B cell (primary cell): ENCODE measurements at regions of chr4 and their contacts with region 1.

Region 1: GRCh38 chr4:119099227-119099801 is 36.3 kb upstream of the MYOZ2 start:
- DNase-seq: no peak
- ATAC-seq: no peak
- H3K4me3 ChIP-seq: no peak overlapping the region
- H3K4me3 Mint-ChIP-seq: no peak overlapping the region
- H3K27ac ChIP-seq: no peak overlapping the region
- H3K27ac Mint-ChIP-seq: no peak overlapping the region
- H3K4me1 ChIP-seq: no peaks in the 10 kb centered on the region
- H3K4me1 Mint-ChIP-seq: peaks cover 2% of the 10 kb centered on the region
- H3K27me3 ChIP-seq: peaks cover 0 to 4% (median under 1%) of the 10 kb centered on the region in 4 experiments
- H3K27me3 Mint-ChIP-seq: peaks cover 17% of the 10 kb centered on the region
- CTCF ChIP-seq: no peak

Region 2: DNA sequence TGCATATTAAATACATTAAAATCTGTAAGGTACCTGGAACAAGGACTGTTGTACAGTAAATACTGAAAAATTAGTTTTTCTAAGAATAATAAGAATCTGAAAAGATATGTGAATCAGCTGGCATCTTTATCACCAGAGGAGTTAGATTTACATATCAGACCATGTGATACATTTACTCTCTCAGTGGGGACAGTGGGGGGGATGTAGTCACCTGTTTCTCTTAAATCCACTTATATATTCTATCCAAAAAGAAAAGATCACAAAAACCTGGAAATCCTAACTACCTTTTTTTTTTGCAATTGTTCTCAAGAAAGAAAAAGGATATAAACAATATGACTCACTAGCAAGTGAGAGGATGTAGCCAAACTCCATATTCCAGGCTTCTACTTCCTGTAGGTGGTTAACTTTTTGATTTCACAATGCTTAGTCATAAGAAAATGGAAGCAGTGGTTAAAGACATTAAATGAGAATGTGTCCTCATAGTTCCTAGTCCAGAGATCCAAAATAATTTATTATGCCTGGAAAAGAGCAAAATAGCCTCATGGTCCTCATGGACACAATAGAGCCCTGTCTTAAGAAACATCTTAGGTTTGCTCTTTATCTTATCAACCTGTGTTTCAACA is 13.8 kb after region 1 on chr4:
- CTCF ChIA-PET with region 1: no interaction called
- POLR2A ChIA-PET with region 1: no interaction called
- intact Hi-C with region 1: no loop called
- DNase-seq: no peak
- ATAC-seq: no peak
- H3K4me3 ChIP-seq: no peak overlapping the region
- H3K4me3 Mint-ChIP-seq: no peak overlapping the region
- H3K27ac ChIP-seq: no peak overlapping the region
- H3K27ac Mint-ChIP-seq: no peak overlapping the region
- H3K4me1 ChIP-seq: no peaks in the 10 kb centered on the region
- H3K4me1 Mint-ChIP-seq: no peaks in the 10 kb centered on the region
- H3K27me3 ChIP-seq: no peaks in the 10 kb centered on the region
- H3K27me3 Mint-ChIP-seq: peaks cover 13% of the 10 kb centered on the region
- CTCF ChIP-seq: no peak

Region 3: GRCh38 chr4:119139822-119140252 is 40.5 kb after region 1 on chr4:
- CTCF ChIA-PET with region 1: no interaction called
- POLR2A ChIA-PET with region 1: no interaction called
- intact Hi-C with region 1: loop called (anchors 5 kb)
- DNase-seq: peak; percentile 24
- ATAC-seq: peak; percentile 71
- H3K4me3 ChIP-seq: peak overlapping the region in 2 of 5 experiments; percentile 18 to 43
- H3K4me3 Mint-ChIP-seq: peak overlapping the region; percentile 52
- H3K27ac ChIP-seq: peak overlapping the region; percentile 1 to 46
- H3K27ac Mint-ChIP-seq: peak overlapping the region; percentile 83
- H3K4me1 ChIP-seq: peaks cover 16 to 20% of the 10 kb centered on the region in 2 donors
- H3K4me1 Mint-ChIP-seq: peaks cover 36% of the 10 kb centered on the region
- H3K27me3 ChIP-seq: no peaks in the 10 kb centered on the region
- H3K27me3 Mint-ChIP-seq: no peaks in the 10 kb centered on the region
- CTCF ChIP-seq: no peak

Region 4: DNA sequence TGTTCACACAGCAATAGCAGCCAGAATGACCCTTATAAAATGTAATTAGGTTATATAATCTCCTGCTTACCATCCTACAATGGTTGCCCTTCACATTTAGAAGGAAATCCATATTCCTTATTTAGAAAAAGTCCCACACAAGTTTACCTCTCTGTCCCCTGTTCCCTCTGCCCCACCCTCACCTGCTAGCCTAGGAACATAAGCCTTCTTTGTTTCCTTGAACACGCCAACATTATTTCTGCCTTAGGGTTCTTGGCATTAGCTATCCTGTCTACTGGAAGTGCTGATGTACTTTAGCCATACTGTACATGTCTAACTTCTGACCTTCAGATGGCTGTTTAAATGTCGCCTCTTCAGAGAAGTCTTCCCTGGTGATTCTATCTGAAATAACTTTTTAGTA is 84.8 kb after region 1 on chr4:
- CTCF ChIA-PET with region 1: no interaction called
- POLR2A ChIA-PET with region 1: no interaction called
- intact Hi-C with region 1: no loop called
- DNase-seq: no peak
- ATAC-seq: no peak
- H3K4me3 ChIP-seq: no peak overlapping the region
- H3K4me3 Mint-ChIP-seq: no peak overlapping the region
- H3K27ac ChIP-seq: no peak overlapping the region
- H3K27ac Mint-ChIP-seq: no peak overlapping the region
- H3K4me1 ChIP-seq: no peaks in the 10 kb centered on the region
- H3K4me1 Mint-ChIP-seq: no peaks in the 10 kb centered on the region
- H3K27me3 ChIP-seq: peaks cover 0 to 3% (median 0%) of the 10 kb centered on the region in 4 experiments
- H3K27me3 Mint-ChIP-seq: peaks cover 8% of the 10 kb centered on the region
- CTCF ChIP-seq: no peak

Region 5: DNA sequence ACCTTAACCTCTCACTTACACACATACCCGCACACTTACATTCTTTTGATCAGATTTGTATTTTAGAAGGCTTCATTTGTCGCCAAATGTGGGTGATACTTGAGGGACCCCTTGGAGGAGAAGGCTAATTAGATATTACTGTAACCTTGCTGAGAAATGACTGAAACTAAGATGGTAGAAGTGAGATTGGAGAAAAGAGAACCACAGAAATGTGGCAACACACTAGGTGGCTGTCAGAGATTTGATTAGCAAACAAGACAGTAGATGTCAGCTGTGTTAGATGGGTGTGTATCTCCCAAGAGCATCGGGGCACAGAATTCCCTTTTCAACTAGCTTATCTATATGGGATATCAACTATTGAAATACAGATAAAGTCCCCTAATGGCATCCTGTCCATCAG is 371.9 kb after region 1 on chr4:
- CTCF ChIA-PET with region 1: no interaction called
- POLR2A ChIA-PET with region 1: no interaction called
- intact Hi-C with region 1: no loop called
- DNase-seq: no peak
- ATAC-seq: no peak
- H3K4me3 ChIP-seq: no peak overlapping the region
- H3K4me3 Mint-ChIP-seq: no peak overlapping the region
- H3K27ac ChIP-seq: no peak overlapping the region
- H3K27ac Mint-ChIP-seq: no peak overlapping the region
- H3K4me1 ChIP-seq: no peaks in the 10 kb centered on the region
- H3K4me1 Mint-ChIP-seq: no peaks in the 10 kb centered on the region
- H3K27me3 ChIP-seq: no peaks in the 10 kb centered on the region
- H3K27me3 Mint-ChIP-seq: no peaks in the 10 kb centered on the region
- CTCF ChIP-seq: no peak